ENCODE measurements at regions of chr20 and their contacts with region 1.

Region 1: GRCh38 chr20:3563548-3564177 is 92.8 kb downstream of the ATRN start:
- DNase-seq: peak in 1 of 2 experiments; percentile 65
- H3K4me3 ChIP-seq: no peak overlapping the region
- H3K4me3 Mint-ChIP-seq: no peak overlapping the region
- H3K27ac Mint-ChIP-seq: no peak overlapping the region
- H3K4me1 ChIP-seq: no peaks in the 10 kb centered on the region
- H3K4me1 Mint-ChIP-seq: no peaks in the 10 kb centered on the region
- H3K27me3 ChIP-seq: no peaks in the 10 kb centered on the region
- H3K27me3 Mint-ChIP-seq: no peaks in the 10 kb centered on the region
- CTCF ChIP-seq: peak; percentile 71 to 76

Region 2: GRCh38 chr20:3358676-3359340 is 204.9 kb before region 1 on chr20:
- CTCF ChIA-PET with region 1: interaction called, 17 read pairs
- POLR2A ChIA-PET with region 1: no interaction called
- intact Hi-C with region 1: loop called (anchors 2 kb)
- DNase-seq: peak in 1 of 2 experiments; percentile 47
- H3K4me3 ChIP-seq: no peak overlapping the region
- H3K4me3 Mint-ChIP-seq: peak overlapping the region; percentile 8
- H3K27ac Mint-ChIP-seq: peak overlapping the region; percentile 27
- H3K4me1 ChIP-seq: no peaks in the 10 kb centered on the region
- H3K4me1 Mint-ChIP-seq: peaks cover 9% of the 10 kb centered on the region
- H3K27me3 ChIP-seq: no peaks in the 10 kb centered on the region
- H3K27me3 Mint-ChIP-seq: peaks cover 2% of the 10 kb centered on the region
- CTCF ChIP-seq: peak; percentile 32 to 63

Region 3: GRCh38 chr20:3632311-3633004 is 68.8 kb after region 1 on chr20:
- CTCF ChIA-PET with region 1: interaction called, 5 read pairs
- POLR2A ChIA-PET with region 1: no interaction called
- intact Hi-C with region 1: loop called (anchors 10 kb)
- DNase-seq: no peak
- H3K4me3 ChIP-seq: no peak overlapping the region
- H3K4me3 Mint-ChIP-seq: no peak overlapping the region
- H3K27ac Mint-ChIP-seq: no peak overlapping the region
- H3K4me1 ChIP-seq: no peaks in the 10 kb centered on the region
- H3K4me1 Mint-ChIP-seq: peaks cover 7% of the 10 kb centered on the region
- H3K27me3 ChIP-seq: no peaks in the 10 kb centered on the region
- H3K27me3 Mint-ChIP-seq: no peaks in the 10 kb centered on the region
- CTCF ChIP-seq: peak in 1 of 2 experiments; percentile 20

Region 4: GRCh38 chr20:4026093-4026601 is 462.5 kb after region 1 on chr20:
- CTCF ChIA-PET with region 1: no interaction called
- POLR2A ChIA-PET with region 1: no interaction called
- intact Hi-C with region 1: no loop called
- DNase-seq: no peak
- H3K4me3 ChIP-seq: no peak overlapping the region
- H3K4me3 Mint-ChIP-seq: no peak overlapping the region
- H3K27ac Mint-ChIP-seq: no peak overlapping the region
- H3K4me1 ChIP-seq: 0 out of 2 replicates have a peak, but pooled peaks cover 7% of the 10 kb centered on the region
- H3K4me1 Mint-ChIP-seq: peaks cover 7% of the 10 kb centered on the region
- H3K27me3 ChIP-seq: no peaks in the 10 kb centered on the region
- H3K27me3 Mint-ChIP-seq: no peaks in the 10 kb centered on the region
- CTCF ChIP-seq: peak in 1 of 2 experiments; percentile 28